ENCODE measurements at regions of chr3 and their contacts with region 1.

Region 1: GRCh38 chr3:58824285-58824684 is 157.7 kb upstream of the FAM3D start:
- DNase-seq: peak; percentile 13 to 70 (median 28)
- ATAC-seq: peak; percentile 81
- H3K4me3 ChIP-seq: no peak overlapping the region
- H3K27ac ChIP-seq: no peak overlapping the region
- H3K4me1 ChIP-seq: no peaks in the 10 kb centered on the region
- H3K27me3 ChIP-seq: no peaks in the 10 kb centered on the region
- CTCF ChIP-seq: peak; percentile 59 to 81 (median 69)
- EP300 ChIP-seq: no peak
- POLR2A ChIP-seq: no peak
- RAD21 ChIP-seq: peak; percentile 68 to 75

Region 2: DNA sequence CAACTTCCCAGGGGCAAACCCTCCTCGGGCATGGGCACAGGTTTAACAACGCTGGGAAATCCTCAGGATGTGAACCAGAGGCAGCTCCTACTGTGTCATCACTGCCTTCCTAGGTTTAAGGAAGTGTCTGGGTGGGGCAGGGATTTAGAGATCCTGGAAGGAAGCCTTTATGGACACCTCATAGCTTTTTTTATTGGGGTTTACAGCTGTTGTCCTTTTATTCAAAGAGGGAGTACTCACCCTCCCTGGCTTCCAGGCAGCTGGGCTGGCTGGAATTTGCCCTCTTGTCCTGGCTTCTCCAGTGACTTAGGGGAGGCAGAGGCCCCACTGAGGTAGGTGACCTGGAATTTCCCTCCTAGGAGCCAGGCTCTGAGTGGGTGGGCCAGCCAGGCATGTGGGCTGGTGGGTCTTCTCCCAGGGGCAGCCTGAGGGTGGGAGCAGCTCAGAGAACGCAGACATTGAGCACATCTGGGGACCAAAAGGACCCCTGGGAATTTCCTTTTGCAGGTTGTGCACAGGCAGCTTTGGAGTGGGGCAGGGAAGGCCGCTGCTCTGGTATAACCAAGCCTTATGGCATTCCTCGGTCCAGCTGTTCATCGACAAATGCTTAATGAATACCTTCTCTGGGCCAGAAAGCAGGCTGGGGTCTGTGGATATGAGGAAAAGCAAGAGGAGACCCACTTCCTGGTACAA is 144.2 kb before region 1 on chr3:
- CTCF ChIA-PET with region 1: no interaction called
- POLR2A ChIA-PET with region 1: no interaction called
- in situ Hi-C with region 1: no loop called
- intact Hi-C with region 1: no loop called
- DNase-seq: no peak
- ATAC-seq: no peak
- H3K4me3 ChIP-seq: no peak overlapping the region
- H3K27ac ChIP-seq: no peak overlapping the region
- H3K4me1 ChIP-seq: no peaks in the 10 kb centered on the region
- H3K27me3 ChIP-seq: peaks cover 3 to 15% of the 10 kb centered on the region in 2 experiments; a peak in 3 of 5 replicates
- CTCF ChIP-seq: no peak
- EP300 ChIP-seq: no peak
- POLR2A ChIP-seq: no peak
- RAD21 ChIP-seq: no peak

Region 3: DNA sequence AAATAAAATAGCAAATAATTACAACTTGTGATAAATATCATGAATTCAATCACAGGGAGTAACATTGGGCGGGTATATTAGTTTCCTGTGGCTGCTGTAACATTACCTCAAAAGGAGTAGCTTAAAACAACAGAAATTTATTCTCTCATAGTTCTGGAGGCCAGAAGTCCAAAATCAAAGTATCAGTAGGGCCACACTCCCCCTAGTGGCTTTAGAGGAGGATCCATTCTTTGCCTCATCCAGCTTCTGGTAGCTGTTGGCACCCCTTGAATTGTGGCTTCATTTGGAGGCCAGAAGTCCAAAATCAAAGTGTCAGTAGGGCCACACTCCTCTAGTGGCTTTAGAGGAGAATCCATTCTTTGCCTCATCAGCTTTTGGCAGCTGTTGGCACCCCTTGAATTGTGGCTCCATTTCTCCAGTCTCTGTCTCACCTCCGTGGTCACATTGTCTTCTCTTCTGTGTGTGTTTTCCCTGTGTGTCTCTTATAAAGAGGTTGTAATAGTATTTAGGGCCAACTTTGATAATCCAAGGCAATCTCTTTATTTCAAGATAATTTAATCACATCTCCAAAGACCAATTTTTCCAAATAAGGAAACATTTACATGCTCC is 228.6 kb after region 1 on chr3:
- CTCF ChIA-PET with region 1: interaction called, 4 read pairs
- POLR2A ChIA-PET with region 1: no interaction called
- in situ Hi-C with region 1: no loop called
- intact Hi-C with region 1: loop called (anchors 2 kb)
- DNase-seq: peak in 1 of 4 experiments; percentile 37
- ATAC-seq: no peak
- H3K4me3 ChIP-seq: no peak overlapping the region
- H3K27ac ChIP-seq: no peak overlapping the region
- H3K4me1 ChIP-seq: peaks cover 0 to 7% of the 10 kb centered on the region in 2 experiments; a peak in 3 of 5 replicates
- H3K27me3 ChIP-seq: no peaks in the 10 kb centered on the region
- CTCF ChIP-seq: peak; percentile 37 to 48 (median 48); a peak in 4 of 6 replicates
- EP300 ChIP-seq: no peak
- POLR2A ChIP-seq: no peak
- RAD21 ChIP-seq: peak; percentile 21 to 69; a peak in 2 of 4 replicates

Measured in K562 (cell line).